ENCODE measurements at regions of chr1 and their contacts with region 1.

Region 1: GRCh38 chr1:2174348-2175054 is 20.1 kb downstream of the FAAP20 start:
- DNase-seq: peak; percentile 57
- H3K4me3 Mint-ChIP-seq: peak overlapping the region; percentile 60
- H3K27ac Mint-ChIP-seq: peak overlapping the region; percentile 46
- H3K4me1 Mint-ChIP-seq: peaks cover 2% of the 10 kb centered on the region
- H3K27me3 Mint-ChIP-seq: no peaks in the 10 kb centered on the region

Region 2: GRCh38 chr1:2133039-2133878 is 41.2 kb before region 1 on chr1:
- CTCF ChIA-PET with region 1: interaction called, 18 read pairs
- POLR2A ChIA-PET with region 1: no interaction called
- intact Hi-C with region 1: no loop called
- DNase-seq: peak; percentile 98
- H3K4me3 Mint-ChIP-seq: peak overlapping the region; percentile 77
- H3K27ac Mint-ChIP-seq: peak overlapping the region; percentile 49
- H3K4me1 Mint-ChIP-seq: peaks cover 19% of the 10 kb centered on the region
- H3K27me3 Mint-ChIP-seq: no peaks in the 10 kb centered on the region

Region 3: GRCh38 chr1:2189459-2190425 is 15.2 kb after region 1 on chr1:
- CTCF ChIA-PET with region 1: interaction called, 18 read pairs
- POLR2A ChIA-PET with region 1: interaction called, 3 read pairs
- intact Hi-C with region 1: no loop called
- DNase-seq: peak; percentile 95
- H3K4me3 Mint-ChIP-seq: peak overlapping the region; percentile 80
- H3K27ac Mint-ChIP-seq: peak overlapping the region; percentile 85
- H3K4me1 Mint-ChIP-seq: peaks cover 23% of the 10 kb centered on the region
- H3K27me3 Mint-ChIP-seq: no peaks in the 10 kb centered on the region

Region 4: DNA sequence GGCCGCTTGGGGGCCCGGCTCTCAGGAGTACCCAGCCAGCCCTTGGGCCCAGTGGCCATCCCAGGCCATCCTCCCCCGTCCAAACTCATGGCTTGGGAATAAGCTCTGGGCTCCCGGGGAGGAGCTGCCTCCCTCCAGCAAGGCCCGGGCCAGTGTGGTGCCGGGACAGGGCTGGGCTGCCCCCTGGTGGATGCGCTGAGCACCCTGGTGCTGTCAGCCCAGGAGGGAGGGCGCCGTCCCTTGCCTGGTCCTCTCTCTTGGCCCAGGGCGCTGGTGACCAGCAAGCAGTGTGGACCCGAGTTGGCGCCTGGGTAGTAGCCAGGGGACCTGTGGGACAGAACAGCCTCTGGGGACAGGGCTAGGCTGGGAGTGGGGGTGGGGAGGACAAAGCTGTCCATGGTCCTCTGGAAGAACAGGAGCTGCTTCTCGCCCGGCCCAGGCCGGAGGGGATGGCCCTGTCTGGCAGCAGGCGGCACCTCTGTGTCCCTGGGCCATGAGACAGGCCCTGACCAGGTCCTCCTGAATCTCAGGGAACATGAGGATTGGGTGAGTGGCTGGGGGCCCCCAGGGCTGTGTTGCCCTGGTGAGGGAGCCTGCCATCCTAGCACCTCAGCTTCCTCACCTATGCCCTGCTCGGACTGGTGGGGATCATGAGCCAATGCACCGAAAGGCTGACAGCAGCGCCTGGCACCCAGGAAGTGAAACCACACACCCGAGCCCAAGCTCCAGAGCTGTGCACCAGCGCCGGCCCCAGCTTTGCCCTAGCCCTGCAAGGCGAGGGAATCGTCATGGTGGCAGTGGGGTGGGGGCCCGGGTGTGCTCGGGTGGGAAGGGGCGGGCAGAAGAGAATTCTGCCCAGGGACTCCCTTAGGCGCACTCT is 207.5 kb after region 1 on chr1:
- CTCF ChIA-PET with region 1: interaction called, 13 read pairs
- POLR2A ChIA-PET with region 1: no interaction called
- intact Hi-C with region 1: no loop called
- DNase-seq: peak; percentile 85
- H3K4me3 Mint-ChIP-seq: no peak overlapping the region
- H3K27ac Mint-ChIP-seq: no peak overlapping the region
- H3K4me1 Mint-ChIP-seq: no peaks in the 10 kb centered on the region
- H3K27me3 Mint-ChIP-seq: no peaks in the 10 kb centered on the region

Measured in activated CD4-positive, alpha-beta memory T cell treated with anti-CD3 and anti-CD28 coated beads for 36 hours (primary cell).